ENCODE measurements at regions of chr3 and their contacts with region 1.

Region 1: DNA sequence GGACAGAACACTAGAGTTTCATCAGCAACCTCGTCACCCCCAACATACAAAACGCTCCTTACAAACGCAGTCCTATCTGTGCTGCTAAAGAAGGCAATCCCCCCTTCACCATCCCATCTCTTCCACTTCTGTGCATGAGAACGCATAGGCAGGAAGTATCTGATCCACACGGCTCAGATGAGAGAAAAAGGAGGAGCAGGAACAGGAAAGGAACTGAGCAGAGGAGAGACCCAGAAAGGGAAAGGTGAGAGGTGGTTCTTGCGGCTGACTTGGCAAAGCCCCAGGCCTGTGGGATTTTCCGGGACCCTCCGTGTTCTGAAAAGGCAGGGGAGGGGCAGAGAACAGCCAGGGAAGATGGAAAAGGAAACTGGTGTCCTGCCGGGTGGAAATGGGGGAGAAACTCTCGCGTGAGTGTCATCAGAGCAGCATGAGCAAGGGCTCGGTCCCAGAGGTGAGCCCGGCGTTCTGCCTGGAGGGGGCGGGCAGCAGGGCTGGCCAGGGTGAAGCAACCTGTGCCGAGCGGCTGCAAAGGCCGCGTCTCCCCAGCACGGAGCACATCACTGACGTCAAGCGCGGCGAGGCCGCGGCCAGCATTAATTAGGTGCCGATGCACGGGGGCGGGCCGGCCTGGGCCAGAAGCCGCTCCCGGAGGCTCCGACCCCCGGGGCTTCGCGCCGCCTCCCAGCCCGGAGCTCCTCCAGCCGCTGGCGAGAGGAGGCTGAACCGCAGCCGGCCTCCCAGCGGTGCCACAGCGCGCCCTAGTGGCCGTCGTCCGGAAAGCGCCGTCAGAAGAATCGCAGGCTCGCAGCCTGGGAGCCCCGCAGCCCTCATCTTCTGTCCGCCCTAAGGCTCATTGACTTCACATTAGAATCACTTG is 35.8 kb downstream of the CPN2 start:
- DNase-seq: peak; percentile 91 to 97
- H3K4me3 ChIP-seq: peak overlapping the region; percentile 51
- H3K27ac ChIP-seq: peak overlapping the region; percentile 75
- H3K4me1 ChIP-seq: peaks cover 27% of the 10 kb centered on the region
- H3K27me3 ChIP-seq: no peaks in the 10 kb centered on the region
- CTCF ChIP-seq: peak; percentile 99

Region 2: GRCh38 chr3:193665370-193665989 is 649.8 kb before region 1 on chr3:
- CTCF ChIA-PET with region 1: interaction called, 5 read pairs
- POLR2A ChIA-PET with region 1: interaction called, 4 read pairs
- intact Hi-C with region 1: loop called (anchors 1 kb)
- DNase-seq: peak in 1 of 2 experiments; percentile 70
- H3K4me3 ChIP-seq: no peak overlapping the region
- H3K27ac ChIP-seq: no peak overlapping the region
- H3K4me1 ChIP-seq: no peaks in the 10 kb centered on the region
- H3K27me3 ChIP-seq: no peaks in the 10 kb centered on the region
- CTCF ChIP-seq: peak; percentile 93

Region 3: GRCh38 chr3:194089357-194090177 is 225.8 kb before region 1 on chr3:
- CTCF ChIA-PET with region 1: interaction called, 3 read pairs
- POLR2A ChIA-PET with region 1: no interaction called
- intact Hi-C with region 1: loop called (anchors 2 kb)
- DNase-seq: peak; percentile 98 to 100
- H3K4me3 ChIP-seq: peak overlapping the region; percentile 16; the same call in 1 of the 2 replicates
- H3K27ac ChIP-seq: peak overlapping the region; percentile 98
- H3K4me1 ChIP-seq: peaks cover 48% of the 10 kb centered on the region
- H3K27me3 ChIP-seq: no peaks in the 10 kb centered on the region
- CTCF ChIP-seq: no peak

Region 4: DNA sequence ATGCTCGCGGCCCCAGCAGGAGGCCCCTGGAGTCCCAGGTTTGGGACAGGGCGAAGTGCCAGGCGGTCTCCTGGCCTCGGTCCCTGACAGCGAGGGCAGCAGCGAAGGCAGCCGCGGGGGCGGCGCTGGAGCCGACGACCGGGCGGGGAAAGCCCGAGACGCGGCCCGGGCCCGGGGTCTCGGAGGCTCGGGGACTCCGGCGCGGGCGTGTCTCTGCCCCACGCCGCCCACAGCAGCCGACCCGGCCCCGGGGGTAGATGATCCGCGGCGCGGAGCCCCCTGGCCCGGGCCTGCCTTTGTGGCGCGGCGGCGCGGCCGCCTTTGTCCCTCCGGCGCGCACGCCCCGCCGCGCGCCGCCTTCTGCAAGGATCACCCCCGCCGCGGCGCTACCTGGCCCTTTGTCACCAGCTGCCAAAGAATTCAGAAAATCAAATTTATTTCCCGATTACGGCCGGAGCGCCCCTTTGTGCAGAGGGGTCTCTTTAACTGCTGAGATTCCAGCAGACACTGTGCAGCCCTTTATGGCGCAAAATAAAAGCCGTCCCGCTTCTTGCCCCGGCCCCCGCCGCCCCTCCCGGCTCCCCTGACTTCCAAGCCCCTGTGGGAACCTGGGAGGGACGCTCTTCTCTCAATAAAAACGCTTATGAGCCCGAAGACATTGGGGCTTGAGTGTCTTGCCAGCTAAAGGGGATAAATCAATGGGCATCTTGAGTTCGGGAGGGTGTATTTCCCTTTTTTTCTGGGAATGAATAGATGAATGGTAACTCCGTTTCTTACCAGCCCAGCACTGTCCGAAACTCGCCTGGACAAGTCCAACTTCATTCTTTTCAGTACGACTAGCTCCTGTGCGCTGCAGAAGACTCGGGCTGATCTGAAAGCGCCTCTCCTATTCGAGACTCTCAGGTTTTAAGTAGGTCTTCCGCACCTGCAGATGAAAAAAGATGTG is 111.0 kb before region 1 on chr3:
- CTCF ChIA-PET with region 1: no interaction called
- POLR2A ChIA-PET with region 1: interaction called, 3 read pairs
- intact Hi-C with region 1: loop called (anchors 1 kb)
- DNase-seq: peak; percentile 62 to 78
- H3K4me3 ChIP-seq: peak overlapping the region; percentile 58
- H3K27ac ChIP-seq: peak overlapping the region; percentile 71
- H3K4me1 ChIP-seq: peaks cover 47% of the 10 kb centered on the region
- H3K27me3 ChIP-seq: no peaks in the 10 kb centered on the region
- CTCF ChIP-seq: no peak

Region 5: DNA sequence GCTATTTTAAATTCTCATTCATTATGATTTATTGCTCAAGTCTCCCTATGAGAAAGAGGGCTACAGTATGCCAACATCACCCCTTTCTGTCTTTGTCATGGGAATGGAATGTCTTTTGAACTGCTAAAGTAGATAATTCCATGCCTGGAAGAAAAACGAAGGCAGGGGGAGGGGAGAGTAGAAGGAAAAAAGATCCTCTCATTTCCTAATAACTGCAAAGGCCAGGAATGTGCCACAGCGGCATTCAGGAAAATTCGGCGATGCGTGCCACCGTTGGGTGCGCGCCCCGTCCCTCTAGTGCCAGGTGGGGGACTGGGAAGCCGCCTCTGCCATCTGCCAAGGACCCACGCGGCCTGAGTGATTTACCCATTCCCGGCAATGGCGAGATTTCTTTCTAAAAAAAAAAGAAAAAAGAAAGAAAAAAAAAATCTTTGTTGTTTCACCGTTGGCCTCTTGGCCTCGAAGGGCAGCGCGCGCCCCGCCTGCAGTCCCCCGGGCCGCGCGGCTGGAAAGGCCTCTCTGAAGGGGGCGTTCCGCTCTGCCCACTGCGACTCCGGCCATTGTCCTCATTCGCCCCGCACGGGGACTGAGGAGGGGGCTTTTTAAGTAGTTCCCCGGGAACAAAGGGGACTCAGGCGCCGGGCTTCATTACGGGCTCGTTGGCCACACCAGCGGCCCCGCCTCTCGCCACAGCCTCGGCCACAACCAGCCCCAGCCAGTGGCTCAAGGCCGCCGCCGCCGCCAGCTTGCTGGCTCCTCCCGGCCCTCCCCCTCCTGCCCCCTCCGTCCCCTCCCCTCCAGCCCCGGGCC is 18.7 kb before region 1 on chr3:
- CTCF ChIA-PET with region 1: interaction called, 18 read pairs
- POLR2A ChIA-PET with region 1: interaction called, 4 read pairs
- intact Hi-C with region 1: loop called (anchors 1 kb)
- DNase-seq: peak; percentile 94 to 98
- H3K4me3 ChIP-seq: peak overlapping the region; percentile 57
- H3K27ac ChIP-seq: peak overlapping the region; percentile 97
- H3K4me1 ChIP-seq: peaks cover 65% of the 10 kb centered on the region
- H3K27me3 ChIP-seq: no peaks in the 10 kb centered on the region
- CTCF ChIP-seq: peak; percentile 30; the same call in 1 of the 2 replicates

Measured in PC-9 (cell line).